ENCODE measurements at regions of chr7 and their contacts with region 1.

Region 1: DNA sequence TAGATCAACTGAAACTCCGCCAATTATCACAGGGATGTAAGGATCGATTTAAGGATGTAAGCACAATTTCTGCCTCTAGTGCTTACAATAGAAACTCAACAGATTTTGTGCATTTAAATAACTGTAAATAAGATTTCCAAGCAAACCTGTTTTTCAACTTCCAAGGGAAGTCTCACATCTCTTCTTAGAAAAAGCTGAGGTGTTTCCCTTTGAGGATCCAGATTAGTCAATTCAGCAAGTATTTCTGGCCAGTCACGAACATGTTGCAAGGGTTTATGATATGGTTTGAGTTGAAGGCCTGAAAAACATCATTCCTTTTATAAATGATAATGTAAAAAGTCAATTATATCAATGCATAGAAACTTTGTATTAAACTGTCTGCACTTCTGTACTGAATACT is 24.0 kb downstream of the KRIT1 start:
- H3K4me3 Mint-ChIP-seq: no peak overlapping the region
- H3K27ac Mint-ChIP-seq: no peak overlapping the region
- H3K4me1 Mint-ChIP-seq: no peaks in the 10 kb centered on the region
- H3K27me3 Mint-ChIP-seq: no peaks in the 10 kb centered on the region

Region 2: DNA sequence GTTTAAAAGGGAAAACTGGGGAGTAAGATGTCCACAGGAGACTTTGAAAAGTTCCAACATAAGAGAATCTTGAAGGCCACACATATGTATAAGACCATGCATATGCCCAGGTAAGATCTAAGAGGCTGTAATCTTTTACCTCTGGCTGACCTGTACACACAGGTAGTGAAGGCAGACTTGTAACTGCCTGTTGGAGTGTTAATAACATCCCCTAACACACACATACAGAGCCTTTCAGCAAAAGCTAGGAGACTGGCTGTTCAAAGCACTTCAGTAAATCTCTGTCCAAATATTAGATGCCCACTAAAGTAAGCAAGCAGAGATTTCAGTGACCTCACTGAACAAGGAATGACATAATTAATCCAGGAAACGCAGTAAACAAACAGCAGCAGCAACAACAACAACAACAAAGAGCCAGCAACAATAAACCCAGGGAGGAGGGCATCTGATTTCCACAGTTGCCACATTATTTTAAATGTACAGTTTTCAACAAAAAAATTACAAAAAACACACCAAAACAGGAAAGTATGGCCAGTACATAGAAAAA is 102.5 kb before region 1 on chr7:
- intact Hi-C with region 1: loop called (anchors 5 kb)
- H3K4me3 Mint-ChIP-seq: no peak overlapping the region
- H3K27ac Mint-ChIP-seq: no peak overlapping the region
- H3K4me1 Mint-ChIP-seq: peaks cover 8% of the 10 kb centered on the region
- H3K27me3 Mint-ChIP-seq: no peaks in the 10 kb centered on the region

Region 3: DNA sequence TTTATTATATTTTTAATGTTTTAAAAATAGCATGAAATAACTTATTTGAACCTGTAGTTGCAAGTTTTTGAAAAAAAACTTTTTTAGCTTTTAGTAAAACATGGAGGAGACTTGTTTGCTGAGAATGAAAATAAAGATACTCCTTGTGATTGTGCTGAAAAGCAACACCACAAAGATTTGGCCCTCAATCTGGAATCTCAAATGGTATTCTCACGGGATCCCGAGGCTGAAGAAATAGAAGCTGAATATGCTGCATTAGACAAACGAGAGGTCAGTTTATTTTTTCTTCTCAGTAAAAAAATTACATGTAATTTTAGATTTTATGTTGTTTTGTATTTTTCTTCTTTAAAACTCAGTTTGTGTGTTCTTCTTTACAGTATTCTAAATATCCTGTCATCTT is 97.5 kb after region 1 on chr7:
- intact Hi-C with region 1: no loop called
- H3K4me3 Mint-ChIP-seq: no peak overlapping the region
- H3K27ac Mint-ChIP-seq: no peak overlapping the region
- H3K4me1 Mint-ChIP-seq: no peaks in the 10 kb centered on the region
- H3K27me3 Mint-ChIP-seq: no peaks in the 10 kb centered on the region